Spleen (tissue), 13 donors: ENCODE measurements at regions of chr11 and their contacts with region 1.

Region 1: GRCh38 chr11:36131721-36132397 is 157.4 kb downstream of the COMMD9 start:
- DNase-seq: no peak
- H3K4me3 ChIP-seq: no peak overlapping the region
- H3K27ac ChIP-seq: peak overlapping the region in 5 of 8 donors; percentile 13 to 25 (median 22)
- H3K4me1 ChIP-seq: peaks cover 0 to 3% (median 0%) of the 10 kb centered on the region in 6 donors
- H3K27me3 ChIP-seq: peaks cover 0 to 32% (median 0%) of the 10 kb centered on the region in 7 donors
- CTCF ChIP-seq: peak in 9 of 11 experiments; percentile 12 to 70 (median 52)
- POLR2A ChIP-seq: no peak

Region 2: DNA sequence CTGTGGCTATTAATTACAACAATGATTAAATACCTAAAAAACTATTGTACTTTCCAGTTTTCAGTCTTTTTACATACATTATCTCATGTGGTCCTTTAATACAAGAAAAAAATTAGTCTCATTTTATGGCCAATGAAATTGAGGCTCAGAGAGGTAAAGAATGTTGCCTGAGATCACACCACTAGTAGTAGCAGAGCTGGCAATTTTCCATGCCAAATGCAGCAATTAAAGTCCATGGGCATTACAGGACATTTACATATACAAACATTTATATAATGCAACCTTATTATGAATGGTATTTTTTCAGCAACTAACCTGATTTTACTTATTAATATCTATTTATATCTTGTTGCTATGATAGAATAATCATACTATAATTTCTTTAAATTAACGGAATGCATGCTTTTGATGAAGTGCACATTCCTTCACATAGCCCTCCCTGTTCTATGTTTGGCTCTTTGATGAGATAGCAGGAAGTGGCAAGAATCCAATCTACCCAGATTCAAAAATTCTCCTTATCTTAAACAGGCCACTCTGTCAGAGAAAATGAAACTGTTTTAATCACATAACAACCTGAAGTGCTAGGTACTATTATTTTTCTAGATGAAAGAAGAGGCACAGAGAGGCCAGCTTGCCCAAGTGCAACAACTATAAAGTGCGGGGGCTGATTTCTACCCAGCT is 308.9 kb before region 1 on chr11:
- intact Hi-C with region 1: loop called (anchors 10 kb)
- DNase-seq: no peak
- H3K4me3 ChIP-seq: no peak overlapping the region
- H3K27ac ChIP-seq: no peak overlapping the region
- H3K4me1 ChIP-seq: peaks cover 5 to 32% (median 21%) of the 10 kb centered on the region in 6 donors
- H3K27me3 ChIP-seq: no peaks in the 10 kb centered on the region
- CTCF ChIP-seq: no peak
- POLR2A ChIP-seq: no peak